ENCODE measurements at regions of chr10 and their contacts with region 1.

Region 1: GRCh38 chr10:113305871-113306270 is 247.0 kb upstream of the HABP2 start:
- DNase-seq: no peak
- H3K4me3 ChIP-seq: no peak overlapping the region
- H3K27ac ChIP-seq: no peak overlapping the region
- H3K4me1 ChIP-seq: peaks cover 0 to 6% (median 3%) of the 10 kb centered on the region in 4 experiments; a peak in 2 of 7 replicates
- H3K27me3 ChIP-seq: no peaks in the 10 kb centered on the region
- CTCF ChIP-seq: no peak
- EP300 ChIP-seq: no peak
- POLR2A ChIP-seq: no peak
- RAD21 ChIP-seq: no peak

Region 2: GRCh38 chr10:113316506-113316905 is 10.6 kb after region 1 on chr10:
- CTCF ChIA-PET with region 1: interaction called, 22 read pairs
- POLR2A ChIA-PET with region 1: no interaction called
- DNase-seq: no peak
- H3K4me3 ChIP-seq: no peak overlapping the region
- H3K27ac ChIP-seq: no peak overlapping the region
- H3K4me1 ChIP-seq: no peaks in the 10 kb centered on the region
- H3K27me3 ChIP-seq: no peaks in the 10 kb centered on the region
- CTCF ChIP-seq: peak in 2 of 3 experiments; percentile 28 to 29; a peak in 2 of 4 replicates
- EP300 ChIP-seq: no peak
- POLR2A ChIP-seq: no peak
- RAD21 ChIP-seq: peak; percentile 32 to 46; a peak in 2 of 4 replicates

Measured in H1 (cell line).